Activated B cell treated with CpG ODN at 0.5 μM for 24 hours (primary cell): ENCODE measurements at regions of chr3 and their contacts with region 1.

Region 1: GRCh38 chr3:143674100-143674968 is 173.9 kb downstream of the SLC9A9 start:
- DNase-seq: peak; percentile 47
- ATAC-seq: peak; percentile 93
- H3K4me3 Mint-ChIP-seq: peak overlapping the region; percentile 76
- H3K27ac Mint-ChIP-seq: peak overlapping the region; percentile 98
- H3K4me1 Mint-ChIP-seq: peaks cover 56% of the 10 kb centered on the region
- H3K27me3 Mint-ChIP-seq: no peaks in the 10 kb centered on the region
- CTCF ChIP-seq: peak; percentile 72

Region 2: DNA sequence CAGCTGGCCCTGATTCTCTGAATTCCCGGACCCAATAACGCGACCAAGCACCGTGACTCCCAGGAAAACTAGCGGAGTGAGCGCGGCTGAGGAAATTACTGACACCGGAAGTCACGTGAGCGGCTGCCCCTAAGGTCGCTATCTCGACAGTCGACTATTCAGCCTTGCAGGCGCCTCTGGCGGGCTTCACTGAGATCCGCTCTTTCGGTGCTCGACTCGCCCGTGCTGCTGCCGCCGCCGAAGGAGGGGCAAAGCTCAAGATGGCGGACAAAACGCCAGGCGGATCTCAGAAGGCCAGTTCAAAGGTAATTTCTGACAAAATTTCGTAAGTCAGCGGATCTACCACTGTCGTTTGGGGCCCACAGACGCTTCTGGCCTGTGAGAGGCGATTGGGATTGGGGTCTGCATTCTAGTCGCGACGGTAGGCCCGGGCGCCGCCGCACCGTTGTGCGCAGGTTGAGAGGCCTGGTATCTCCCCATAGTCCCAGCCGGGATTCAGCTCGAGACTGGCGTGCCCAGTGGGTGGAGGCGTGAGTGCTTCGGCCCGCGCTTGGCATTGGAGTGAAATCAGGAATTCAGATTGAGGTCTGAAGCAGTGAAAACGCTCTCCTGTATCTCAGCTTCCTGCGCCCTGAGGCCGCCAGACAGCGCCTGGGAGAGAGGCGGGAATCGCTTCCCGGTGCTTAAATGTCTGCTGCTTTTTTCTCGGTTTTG is 672.8 kb before region 1 on chr3 and contains the start of gene U2SURP:
- CTCF ChIA-PET with region 1: interaction called, 3 read pairs
- POLR2A ChIA-PET with region 1: no interaction called
- intact Hi-C with region 1: loop called (anchors 1 kb)
- DNase-seq: peak; percentile 74
- ATAC-seq: peak; percentile 93
- H3K4me3 Mint-ChIP-seq: peak within 1 kb of the TSS; percentile 99
- H3K27ac Mint-ChIP-seq: peak within 1 kb of the TSS; percentile 98
- H3K4me1 Mint-ChIP-seq: peaks cover 41% of the 10 kb centered on the region
- H3K27me3 Mint-ChIP-seq: no peaks in the 10 kb centered on the region
- CTCF ChIP-seq: no peak
- total RNA-seq, gene U2SURP: 117 and 131 TPM in 2 replicates

Region 3: DNA sequence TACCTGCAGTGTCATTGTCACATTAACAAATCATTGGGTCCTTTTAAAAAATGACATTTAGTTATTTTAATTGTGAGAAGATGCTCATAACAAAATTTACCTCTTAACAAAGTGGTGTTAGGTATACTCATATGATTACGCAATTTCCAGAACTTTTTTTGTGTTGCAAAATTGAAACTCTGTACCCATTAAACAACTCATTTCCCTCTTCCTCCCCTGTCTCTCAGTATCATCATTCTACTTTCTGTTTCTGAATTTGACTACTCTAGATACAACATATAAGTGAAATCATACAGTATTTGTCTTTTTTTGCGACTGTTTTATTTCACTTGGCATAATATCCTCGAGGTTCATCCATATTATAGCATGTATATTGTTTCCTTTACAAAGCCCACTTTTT is 613.4 kb before region 1 on chr3:
- CTCF ChIA-PET with region 1: no interaction called
- POLR2A ChIA-PET with region 1: no interaction called
- intact Hi-C with region 1: loop called (anchors 1 kb)
- DNase-seq: no peak
- ATAC-seq: peak; percentile 57
- H3K4me3 Mint-ChIP-seq: no peak overlapping the region
- H3K27ac Mint-ChIP-seq: no peak overlapping the region
- H3K4me1 Mint-ChIP-seq: peaks cover 6% of the 10 kb centered on the region
- H3K27me3 Mint-ChIP-seq: no peaks in the 10 kb centered on the region
- CTCF ChIP-seq: no peak

Region 4: DNA sequence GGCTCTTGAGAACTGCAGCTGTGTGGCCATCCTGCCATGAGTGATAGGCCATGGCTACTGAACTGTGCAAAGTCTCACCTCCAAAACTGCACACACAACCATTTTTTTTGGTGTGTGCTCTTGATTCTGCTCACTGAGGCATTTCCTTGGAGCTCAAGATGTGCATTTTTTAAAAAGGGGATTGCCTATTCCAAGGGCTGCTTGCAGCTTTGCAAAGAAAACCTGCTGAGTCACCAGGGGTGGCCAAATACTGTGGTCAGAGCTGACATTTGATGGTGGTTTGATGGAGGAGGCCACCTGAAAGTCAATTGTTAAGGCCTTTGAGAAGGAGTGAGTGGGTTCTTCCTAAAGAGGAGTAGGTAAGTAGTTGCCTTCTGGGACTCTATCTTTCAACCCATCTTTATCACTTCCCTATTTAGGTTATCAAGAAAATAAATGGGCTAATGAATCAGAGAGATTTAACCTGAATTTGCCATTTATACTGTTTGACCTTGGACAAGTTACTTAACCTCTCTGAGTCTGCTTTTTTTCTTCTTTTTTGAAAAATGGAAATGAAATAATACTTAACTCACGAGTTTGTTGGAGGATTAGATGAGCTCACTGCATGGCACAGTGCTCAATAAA is 466.9 kb before region 1 on chr3:
- CTCF ChIA-PET with region 1: no interaction called
- POLR2A ChIA-PET with region 1: no interaction called
- intact Hi-C with region 1: loop called (anchors 5 kb)
- DNase-seq: no peak
- ATAC-seq: peak; percentile 80
- H3K4me3 Mint-ChIP-seq: peak overlapping the region; percentile 3
- H3K27ac Mint-ChIP-seq: peak overlapping the region; percentile 21
- H3K4me1 Mint-ChIP-seq: peaks cover 16% of the 10 kb centered on the region
- H3K27me3 Mint-ChIP-seq: no peaks in the 10 kb centered on the region
- CTCF ChIP-seq: no peak

Region 5: GRCh38 chr3:143476965-143477640 is 197.2 kb before region 1 on chr3:
- CTCF ChIA-PET with region 1: no interaction called
- POLR2A ChIA-PET with region 1: no interaction called
- intact Hi-C with region 1: loop called (anchors 2 kb)
- DNase-seq: no peak
- ATAC-seq: no peak
- H3K4me3 Mint-ChIP-seq: no peak overlapping the region
- H3K27ac Mint-ChIP-seq: no peak overlapping the region
- H3K4me1 Mint-ChIP-seq: peaks cover 26% of the 10 kb centered on the region
- H3K27me3 Mint-ChIP-seq: no peaks in the 10 kb centered on the region
- CTCF ChIP-seq: no peak

Region 6: GRCh38 chr3:143644370-143645089 is 29.8 kb before region 1 on chr3:
- CTCF ChIA-PET with region 1: no interaction called
- POLR2A ChIA-PET with region 1: no interaction called
- intact Hi-C with region 1: loop called (anchors 1 kb)
- DNase-seq: no peak
- ATAC-seq: peak; percentile 45
- H3K4me3 Mint-ChIP-seq: no peak overlapping the region
- H3K27ac Mint-ChIP-seq: peak overlapping the region; percentile 50
- H3K4me1 Mint-ChIP-seq: peaks cover 14% of the 10 kb centered on the region
- H3K27me3 Mint-ChIP-seq: no peaks in the 10 kb centered on the region
- CTCF ChIP-seq: no peak